ENCODE measurements at regions of chr11 and their contacts with region 1.

Region 1: DNA sequence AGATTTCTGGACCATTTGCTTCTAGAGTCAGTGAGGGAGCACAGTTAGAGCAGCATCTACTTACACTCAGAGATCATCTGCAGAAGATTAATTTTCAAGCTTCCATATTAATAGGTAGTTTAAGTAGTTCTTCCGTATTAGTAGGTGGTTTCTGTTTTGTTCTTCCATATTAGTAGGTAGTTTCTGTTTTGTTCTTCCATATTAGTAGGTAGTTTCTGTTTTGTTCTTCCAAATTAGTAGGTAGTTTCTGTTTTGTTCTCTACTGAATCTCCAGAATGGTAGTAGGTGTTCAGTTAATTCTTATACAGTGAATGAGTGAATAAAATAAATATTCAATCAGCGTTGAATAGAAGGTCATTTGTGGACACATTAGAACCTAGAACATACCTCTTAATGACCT is 175.7 kb downstream of the TMEM135 start:
- DNase-seq: no peak
- H3K4me3 Mint-ChIP-seq: no peak overlapping the region
- H3K27ac Mint-ChIP-seq: no peak overlapping the region
- H3K4me1 Mint-ChIP-seq: peaks cover 8% of the 10 kb centered on the region
- H3K27me3 Mint-ChIP-seq: no peaks in the 10 kb centered on the region

Region 2: DNA sequence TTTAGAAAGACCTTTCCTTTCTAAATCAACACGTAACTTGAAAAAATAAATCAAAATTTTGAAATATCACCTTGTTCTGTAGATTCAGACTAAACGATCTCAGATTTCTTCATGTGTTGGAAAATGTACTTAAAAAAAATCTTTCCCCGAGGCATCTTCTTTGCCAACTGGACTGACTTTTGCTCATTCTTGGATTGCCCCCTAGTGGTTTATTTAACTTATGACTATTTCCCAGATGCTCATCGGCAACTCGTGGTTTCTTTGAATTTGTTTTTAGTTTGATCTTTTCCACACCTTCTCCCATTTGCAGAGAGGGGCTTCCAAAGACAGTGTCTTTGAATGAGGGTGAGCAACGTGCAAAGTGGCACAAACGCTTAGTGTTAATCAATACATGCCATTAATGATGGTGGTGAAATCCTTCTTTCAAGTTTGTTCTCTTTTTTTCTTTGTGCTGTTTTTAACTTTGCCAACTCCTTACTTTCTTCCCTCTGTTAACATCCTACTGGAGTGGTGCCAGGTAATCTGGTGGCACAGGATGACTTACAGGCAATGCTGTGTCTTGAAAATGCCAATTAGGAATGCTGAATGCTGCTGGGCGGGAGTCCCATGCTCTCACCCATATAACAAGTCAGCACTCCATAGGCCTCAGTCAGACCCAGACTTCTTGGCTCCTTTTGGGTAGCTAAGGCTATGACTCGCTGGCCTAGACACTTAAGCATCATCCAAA is 394.8 kb before region 1 on chr11:
- intact Hi-C with region 1: no loop called
- DNase-seq: no peak
- H3K4me3 Mint-ChIP-seq: no peak overlapping the region
- H3K27ac Mint-ChIP-seq: no peak overlapping the region
- H3K4me1 Mint-ChIP-seq: no peaks in the 10 kb centered on the region
- H3K27me3 Mint-ChIP-seq: peaks cover 20% of the 10 kb centered on the region

Region 3: DNA sequence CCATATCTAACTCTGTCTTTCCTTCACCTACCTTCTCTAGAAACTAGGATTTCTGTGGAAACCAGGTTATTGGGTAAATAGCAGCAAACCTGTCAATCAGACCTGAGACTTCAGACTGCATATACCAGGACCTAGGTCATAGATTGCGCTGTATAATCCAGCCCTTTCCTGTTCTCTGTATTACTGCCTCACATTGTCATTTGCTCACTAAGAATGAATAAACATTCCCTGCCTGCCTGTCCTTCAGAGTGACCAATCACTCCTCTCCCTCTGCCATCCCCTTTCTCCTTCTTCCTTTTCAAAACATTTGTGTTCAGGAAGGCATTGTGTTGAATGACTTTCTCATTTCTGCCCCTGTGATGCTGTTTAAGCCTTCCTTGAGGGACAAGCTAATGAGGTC is 244.2 kb before region 1 on chr11:
- intact Hi-C with region 1: no loop called
- DNase-seq: no peak
- H3K4me3 Mint-ChIP-seq: no peak overlapping the region
- H3K27ac Mint-ChIP-seq: no peak overlapping the region
- H3K4me1 Mint-ChIP-seq: no peaks in the 10 kb centered on the region
- H3K27me3 Mint-ChIP-seq: peaks cover 17% of the 10 kb centered on the region

Region 4: GRCh38 chr11:87259736-87260135 is 46.3 kb after region 1 on chr11:
- intact Hi-C with region 1: loop called (anchors 5 kb)
- DNase-seq: no peak
- H3K4me3 Mint-ChIP-seq: no peak overlapping the region
- H3K27ac Mint-ChIP-seq: no peak overlapping the region
- H3K4me1 Mint-ChIP-seq: peaks cover 18% of the 10 kb centered on the region
- H3K27me3 Mint-ChIP-seq: no peaks in the 10 kb centered on the region

Measured in activated T-helper 2 cell treated with anti-CD3 and anti-CD28 coated beads, Interferon-gamma antibody, Interleukin-2, Interleukin-4, amounts not matched to agents 10 μg/mL and 5 μg/mL and 100 μg/mL, durations not matched to agents 14 hours and 24 hours and 36 hours (primary cell).